Upper lobe of right lung (tissue), 1 donor: ENCODE measurements at regions of chr7 and their contacts with region 1.

Region 1: GRCh38 chr7:21261627-21262594 is 166.0 kb upstream of the SP4 start:
- DNase-seq: no peak
- ATAC-seq: peak; percentile 75
- H3K4me3 ChIP-seq: no peak overlapping the region
- H3K27ac ChIP-seq: no peak overlapping the region
- H3K4me1 ChIP-seq: no peaks in the 10 kb centered on the region
- H3K27me3 ChIP-seq: peaks cover 8% of the 10 kb centered on the region
- CTCF ChIP-seq: peak; percentile 43

Region 2: GRCh38 chr7:21352540-21353387 is 90.9 kb after region 1 on chr7:
- intact Hi-C with region 1: no loop called
- DNase-seq: no peak
- ATAC-seq: peak; percentile 79
- H3K4me3 ChIP-seq: no peak overlapping the region
- H3K27ac ChIP-seq: peak overlapping the region; percentile 60
- H3K4me1 ChIP-seq: peaks cover 12% of the 10 kb centered on the region
- H3K27me3 ChIP-seq: no peaks in the 10 kb centered on the region
- CTCF ChIP-seq: no peak

Region 3: GRCh38 chr7:21507626-21508343 is 245.9 kb after region 1 on chr7:
- intact Hi-C with region 1: loop called (anchors 10 kb)
- DNase-seq: no peak
- ATAC-seq: peak; percentile 85
- H3K4me3 ChIP-seq: no peak overlapping the region
- H3K27ac ChIP-seq: no peak overlapping the region
- H3K4me1 ChIP-seq: no peaks in the 10 kb centered on the region
- H3K27me3 ChIP-seq: no peaks in the 10 kb centered on the region
- CTCF ChIP-seq: peak; percentile 73